Posterior vena cava (tissue), 2 donors: ENCODE measurements at regions of chr3 and their contacts with region 1.

Region 1: GRCh38 chr3:190224863-190225692 is 97.2 kb downstream of the CLDN1 start:
- DNase-seq: no peak

Region 2: DNA sequence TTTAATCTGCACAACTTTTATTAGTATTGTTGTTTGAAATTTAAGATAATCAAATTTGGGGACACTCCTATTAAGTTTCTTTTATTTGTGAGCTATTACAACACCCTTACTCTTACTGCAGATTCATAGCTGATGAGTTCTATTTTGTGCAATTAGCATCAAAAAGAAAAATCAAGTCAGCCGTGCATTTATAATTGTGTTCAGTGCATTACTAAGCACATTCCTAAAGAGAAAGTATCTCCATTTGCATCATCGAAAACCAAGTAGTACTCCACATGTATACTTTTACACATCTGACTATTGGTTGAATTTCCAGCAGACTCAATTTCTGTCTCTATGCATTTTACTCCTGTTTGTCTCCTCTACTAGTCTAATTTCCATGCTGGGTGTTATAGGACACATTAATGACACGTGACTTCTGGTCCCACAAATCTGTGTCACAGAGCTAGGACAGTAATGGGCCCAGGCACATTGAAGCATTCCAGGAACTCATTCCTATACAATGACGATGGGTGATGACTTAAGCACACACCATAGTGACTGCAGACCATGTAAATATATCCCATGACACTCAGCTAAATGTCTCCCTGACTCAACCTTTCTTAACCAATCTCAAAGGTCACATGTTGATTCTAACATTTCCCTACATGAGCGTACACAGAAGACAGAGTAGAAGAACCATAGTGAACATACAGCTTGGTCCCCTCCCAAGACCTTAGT is 1593.6 kb before region 1 on chr3:
- intact Hi-C with region 1: no loop called
- DNase-seq: no peak

Region 3: DNA sequence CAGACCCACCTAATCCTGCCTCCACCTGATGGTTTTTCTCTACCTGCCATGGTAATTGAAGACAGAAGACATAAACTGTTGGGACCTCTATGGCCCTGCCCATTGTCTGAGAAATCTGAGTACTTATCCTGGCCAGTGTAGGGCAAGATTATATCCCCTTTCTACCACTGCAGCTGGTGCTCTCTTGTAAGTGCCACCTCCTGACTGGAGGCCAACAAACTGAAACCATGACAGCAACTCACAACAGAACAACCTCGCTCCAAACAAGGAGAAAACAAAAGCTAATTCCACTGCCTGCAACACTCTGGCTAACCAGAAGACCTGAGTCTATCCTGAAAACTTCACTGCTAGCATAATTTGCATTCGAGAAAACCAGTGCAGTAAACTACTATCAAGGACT is 14.2 kb after region 1 on chr3:
- intact Hi-C with region 1: no loop called
- DNase-seq: no peak

Region 4: DNA sequence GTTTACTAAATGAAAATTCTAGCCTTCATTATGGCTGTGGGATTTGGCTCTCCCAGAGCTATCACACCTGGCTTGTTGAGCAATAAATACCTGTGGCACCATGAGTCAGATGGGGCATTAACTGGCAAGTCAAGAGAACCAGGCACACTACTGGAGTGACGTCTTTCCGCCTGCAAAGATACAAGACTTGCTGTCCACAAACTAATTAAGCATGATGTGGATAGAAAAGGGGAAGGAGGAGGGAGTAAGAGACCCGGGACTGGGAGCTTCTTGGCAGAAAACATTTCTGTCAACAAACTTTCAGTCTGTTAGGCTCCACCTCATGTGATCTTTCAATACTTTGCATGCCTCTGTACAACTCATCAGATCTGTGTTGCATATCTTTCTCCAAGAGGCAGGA is 40.7 kb after region 1 on chr3:
- intact Hi-C with region 1: no loop called
- DNase-seq: no peak

Region 5: DNA sequence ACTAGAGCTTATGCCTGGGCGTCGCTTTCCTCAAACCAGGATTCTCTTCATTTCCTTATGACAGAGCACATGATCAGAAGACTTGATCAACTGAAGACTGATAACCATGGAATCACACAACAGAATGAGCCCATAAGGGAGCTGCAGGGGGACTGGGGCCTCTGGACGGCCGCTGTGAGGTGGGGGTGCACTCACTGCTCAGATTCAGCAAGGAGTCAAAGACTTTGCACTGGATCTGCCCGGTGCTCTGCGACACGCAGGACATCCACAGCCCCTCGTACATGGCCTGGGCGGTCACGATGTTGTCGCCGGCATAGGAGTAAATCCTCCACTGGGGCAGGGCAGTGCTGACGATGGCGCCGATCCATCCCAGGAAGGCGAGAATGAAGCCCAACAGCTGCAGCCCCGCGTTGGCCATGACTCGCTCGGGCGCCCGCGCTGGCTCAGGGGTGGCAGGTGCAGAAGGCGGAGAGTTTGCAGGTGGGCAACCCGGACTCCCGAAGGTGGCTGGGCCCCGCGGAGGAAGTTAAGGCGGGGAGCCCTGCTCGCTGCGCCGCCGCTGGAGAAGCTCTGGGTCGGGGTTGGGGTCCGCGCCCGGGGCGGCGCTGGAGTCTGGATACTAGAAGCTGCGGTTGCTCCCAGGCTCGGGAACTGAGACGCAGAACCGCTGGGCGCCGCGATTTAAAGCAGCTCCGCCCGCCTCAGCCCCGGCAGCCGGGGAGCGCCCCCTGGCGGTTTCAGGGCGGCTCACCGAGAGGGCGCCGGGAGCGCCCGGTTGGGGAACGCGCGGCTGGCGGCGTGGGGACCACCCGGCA is 96.9 kb after region 1 on chr3 and contains the start of gene CLDN1:
- intact Hi-C with region 1: loop called in 1 of 2 experiments (anchors 10 kb)
- DNase-seq: peak; percentile 94
- total RNA-seq, gene CLDN1: 0.46 to 1.1 TPM

Region 6: GRCh38 chr3:190424478-190425439 is 199.7 kb after region 1 on chr3:
- intact Hi-C with region 1: loop called in 1 of 2 experiments (anchors 10 kb)
- DNase-seq: no peak